CD14-positive monocyte (primary cell): ENCODE measurements at regions of chr22 and their contacts with region 1.

Region 1: GRCh38 chr22:32144496-32145274 is 14.4 kb downstream of the C22orf42 start:
- DNase-seq: peak; percentile 85 to 95 (median 92)
- H3K4me3 ChIP-seq: peak overlapping the region in 1 of 3 experiments; percentile 48
- H3K4me3 Mint-ChIP-seq: peak overlapping the region; percentile 47 to 67
- H3K27ac ChIP-seq: peak overlapping the region; percentile 70 to 72
- H3K27ac Mint-ChIP-seq: peak overlapping the region; percentile 86 to 97 (median 92)
- H3K4me1 ChIP-seq: peaks cover 59 to 60% of the 10 kb centered on the region in 2 donors
- H3K4me1 Mint-ChIP-seq: peaks cover 58% of the 10 kb centered on the region
- H3K27me3 ChIP-seq: no peaks in the 10 kb centered on the region
- H3K27me3 Mint-ChIP-seq: peaks cover 0 to under 1% (median 0%) of the 10 kb centered on the region in 3 donors
- CTCF ChIP-seq: no peak

Region 2: GRCh38 chr22:32164075-32164860 is 19.6 kb after region 1 on chr22:
- intact Hi-C with region 1: loop called in 1 of 2 experiments (anchors 2 kb)
- DNase-seq: peak; percentile 63 to 88 (median 77)
- H3K4me3 ChIP-seq: peak overlapping the region in 1 of 3 experiments; percentile 36
- H3K4me3 Mint-ChIP-seq: peak overlapping the region in 1 of 2 donors; percentile 72
- H3K27ac ChIP-seq: peak overlapping the region; percentile 89
- H3K27ac Mint-ChIP-seq: peak overlapping the region; percentile 86 to 97 (median 93)
- H3K4me1 ChIP-seq: peaks cover 27 to 28% of the 10 kb centered on the region in 2 donors
- H3K4me1 Mint-ChIP-seq: peaks cover 27% of the 10 kb centered on the region
- H3K27me3 ChIP-seq: no peaks in the 10 kb centered on the region
- H3K27me3 Mint-ChIP-seq: peaks cover 0 to 6% (median 3%) of the 10 kb centered on the region in 3 donors
- CTCF ChIP-seq: no peak

Region 3: DNA sequence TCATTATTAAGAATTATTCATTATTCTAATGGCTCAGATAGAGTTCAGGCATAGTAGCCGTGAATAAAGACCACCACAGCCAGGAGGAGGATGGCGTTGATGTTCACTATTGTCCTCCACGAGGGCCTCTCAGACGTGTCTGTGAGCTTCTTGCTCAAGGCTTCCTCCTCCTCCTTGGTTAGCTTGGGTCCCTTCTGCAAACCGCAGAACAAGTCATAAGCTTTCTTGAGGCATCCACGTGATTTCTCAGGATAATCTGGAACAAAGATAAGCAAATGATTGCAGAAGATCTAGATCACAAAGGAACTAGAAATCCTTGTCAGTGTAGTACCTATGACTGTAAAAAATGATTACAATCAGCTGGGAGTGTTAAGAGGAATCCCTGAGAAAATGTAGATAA is 73.8 kb after region 1 on chr22:
- intact Hi-C with region 1: loop called (anchors 5 to 10 kb)
- DNase-seq: peak; percentile 82 to 93 (median 90)
- H3K4me3 ChIP-seq: peak overlapping the region in 1 of 3 experiments; percentile 19
- H3K4me3 Mint-ChIP-seq: peak overlapping the region in 1 of 2 donors; percentile 72
- H3K27ac ChIP-seq: peak overlapping the region; percentile 73 to 93
- H3K27ac Mint-ChIP-seq: peak overlapping the region; percentile 82 to 98 (median 96)
- H3K4me1 ChIP-seq: peaks cover 28 to 38% of the 10 kb centered on the region in 2 donors
- H3K4me1 Mint-ChIP-seq: peaks cover 39% of the 10 kb centered on the region
- H3K27me3 ChIP-seq: no peaks in the 10 kb centered on the region
- H3K27me3 Mint-ChIP-seq: no peaks in the 10 kb centered on the region
- CTCF ChIP-seq: no peak

Region 4: GRCh38 chr22:32319861-32320406 is 175.2 kb after region 1 on chr22:
- intact Hi-C with region 1: no loop called
- DNase-seq: no peak
- H3K4me3 ChIP-seq: no peak overlapping the region
- H3K4me3 Mint-ChIP-seq: no peak overlapping the region
- H3K27ac ChIP-seq: no peak overlapping the region
- H3K27ac Mint-ChIP-seq: no peak overlapping the region
- H3K4me1 ChIP-seq: no peaks in the 10 kb centered on the region
- H3K4me1 Mint-ChIP-seq: no peaks in the 10 kb centered on the region
- H3K27me3 ChIP-seq: no peaks in the 10 kb centered on the region
- H3K27me3 Mint-ChIP-seq: peaks cover 12 to 22% (median 16%) of the 10 kb centered on the region in 3 donors
- CTCF ChIP-seq: no peak

Region 5: DNA sequence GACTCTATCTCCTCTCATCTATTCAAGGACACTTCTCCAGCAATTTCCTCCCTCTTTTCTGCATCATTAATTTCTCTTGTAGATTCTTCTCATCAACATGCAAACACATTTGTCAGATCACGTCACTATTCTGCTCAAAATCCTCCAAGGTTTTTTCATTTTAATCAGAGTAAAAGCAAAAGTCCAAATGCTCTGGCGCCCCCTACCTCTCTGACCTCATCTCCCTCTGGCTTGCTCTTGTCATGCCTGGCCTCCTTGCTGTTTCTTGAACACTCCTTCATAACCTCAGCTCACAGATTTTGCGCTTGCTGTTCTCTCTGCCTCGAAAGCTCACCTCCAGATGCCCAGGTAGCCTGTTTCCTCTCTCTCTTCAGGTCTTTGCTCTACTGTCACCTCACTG is 245.0 kb after region 1 on chr22:
- intact Hi-C with region 1: no loop called
- DNase-seq: no peak
- H3K4me3 ChIP-seq: no peak overlapping the region
- H3K4me3 Mint-ChIP-seq: no peak overlapping the region
- H3K27ac ChIP-seq: no peak overlapping the region
- H3K27ac Mint-ChIP-seq: peak overlapping the region in 1 of 7 donors; percentile 1
- H3K4me1 ChIP-seq: no peaks in the 10 kb centered on the region
- H3K4me1 Mint-ChIP-seq: no peaks in the 10 kb centered on the region
- H3K27me3 ChIP-seq: no peaks in the 10 kb centered on the region
- H3K27me3 Mint-ChIP-seq: no peaks in the 10 kb centered on the region
- CTCF ChIP-seq: peak; percentile 33